Activated CD4-positive, alpha-beta T cell treated with anti-CD3 and anti-CD28 coated beads, Interleukin-2, amount 10 ng/mL, durations not matched to agents 24 days and 14 days (primary cell): ENCODE measurements at regions of chr3 and their contacts with region 1.

Region 1: GRCh38 chr3:184289426-184289938 is 9.6 kb upstream of the PSMD2 start:
- DNase-seq: peak; percentile 89
- H3K4me3 Mint-ChIP-seq: no peak overlapping the region
- H3K27ac Mint-ChIP-seq: no peak overlapping the region
- H3K4me1 Mint-ChIP-seq: peaks cover 5% of the 10 kb centered on the region
- H3K27me3 Mint-ChIP-seq: peaks cover 15% of the 10 kb centered on the region

Region 2: GRCh38 chr3:183895296-183895695 is 394.2 kb before region 1 on chr3:
- intact Hi-C with region 1: loop called (anchors 1 kb)
- DNase-seq: peak; percentile 83
- H3K4me3 Mint-ChIP-seq: no peak overlapping the region
- H3K27ac Mint-ChIP-seq: no peak overlapping the region
- H3K4me1 Mint-ChIP-seq: no peaks in the 10 kb centered on the region
- H3K27me3 Mint-ChIP-seq: peaks cover 17% of the 10 kb centered on the region

Region 3: DNA sequence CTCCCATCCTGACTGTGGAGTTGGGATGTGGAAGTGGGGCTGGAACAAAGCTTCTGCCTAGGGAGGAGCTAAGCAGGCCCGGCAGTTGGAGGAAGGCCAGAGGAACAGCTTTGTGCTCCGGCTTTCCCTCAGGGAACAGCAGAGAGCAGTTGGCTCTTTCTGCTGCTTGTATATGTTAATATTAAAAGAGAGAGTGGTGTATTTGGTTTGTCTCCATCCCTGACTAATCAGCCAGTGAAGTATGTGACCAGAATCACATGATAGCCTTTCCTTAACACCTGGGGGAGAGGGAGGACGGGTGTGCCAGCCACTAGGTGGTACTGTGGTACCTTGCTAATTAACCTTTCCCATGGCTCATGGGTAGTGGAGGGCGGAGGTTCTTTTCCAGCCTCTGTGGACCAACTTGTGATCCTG is 144.4 kb before region 1 on chr3:
- intact Hi-C with region 1: loop called (anchors 5 kb)
- DNase-seq: peak; percentile 69
- H3K4me3 Mint-ChIP-seq: no peak overlapping the region
- H3K27ac Mint-ChIP-seq: no peak overlapping the region
- H3K4me1 Mint-ChIP-seq: peaks cover 2% of the 10 kb centered on the region
- H3K27me3 Mint-ChIP-seq: no peaks in the 10 kb centered on the region

Region 4: DNA sequence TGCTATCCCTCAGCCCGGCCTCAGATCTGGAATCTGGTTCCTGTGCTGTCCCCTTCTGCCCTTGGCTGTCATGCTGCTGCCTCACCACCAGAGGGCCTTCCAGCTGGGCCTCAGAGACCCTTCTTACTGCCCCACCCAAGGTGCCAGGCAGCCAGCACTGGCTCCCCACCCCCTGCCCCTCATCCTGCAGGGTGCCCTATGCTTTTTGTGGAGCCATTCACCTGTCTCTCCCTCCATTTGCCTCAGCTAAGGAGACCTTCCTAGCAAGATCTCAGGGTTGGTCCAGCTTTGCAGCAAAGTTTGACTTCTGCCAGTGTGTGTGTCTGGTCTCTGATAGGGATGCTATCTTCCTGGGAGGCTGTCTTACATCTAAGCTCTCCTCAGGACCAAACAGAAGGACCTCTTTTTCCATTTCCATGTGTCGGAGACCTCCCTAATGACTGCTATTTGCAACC is 62.0 kb before region 1 on chr3:
- intact Hi-C with region 1: loop called (anchors 1 kb)
- DNase-seq: peak; percentile 87
- H3K4me3 Mint-ChIP-seq: no peak overlapping the region
- H3K27ac Mint-ChIP-seq: no peak overlapping the region
- H3K4me1 Mint-ChIP-seq: peaks cover 8% of the 10 kb centered on the region
- H3K27me3 Mint-ChIP-seq: peaks cover 53% of the 10 kb centered on the region